A549 (cell line): ENCODE measurements at regions of chr12 and their contacts with region 1.

Region 1: GRCh38 chr12:40010899-40011774 is 94.7 kb downstream of the SLC2A13 start:
- DNase-seq: peak; percentile 55 to 80
- ATAC-seq: peak; percentile 95 to 98
- H3K4me3 ChIP-seq: no peak overlapping the region
- H3K27ac ChIP-seq: peak overlapping the region in 1 of 2 experiments; percentile 42; a peak in 3 of 6 replicates
- H3K4me1 ChIP-seq: peaks cover 18% of the 10 kb centered on the region
- CTCF ChIP-seq: peak; percentile 96
- EP300 ChIP-seq: no peak
- POLR2A ChIP-seq: no peak
- RAD21 ChIP-seq: peak; percentile 82

Region 2: DNA sequence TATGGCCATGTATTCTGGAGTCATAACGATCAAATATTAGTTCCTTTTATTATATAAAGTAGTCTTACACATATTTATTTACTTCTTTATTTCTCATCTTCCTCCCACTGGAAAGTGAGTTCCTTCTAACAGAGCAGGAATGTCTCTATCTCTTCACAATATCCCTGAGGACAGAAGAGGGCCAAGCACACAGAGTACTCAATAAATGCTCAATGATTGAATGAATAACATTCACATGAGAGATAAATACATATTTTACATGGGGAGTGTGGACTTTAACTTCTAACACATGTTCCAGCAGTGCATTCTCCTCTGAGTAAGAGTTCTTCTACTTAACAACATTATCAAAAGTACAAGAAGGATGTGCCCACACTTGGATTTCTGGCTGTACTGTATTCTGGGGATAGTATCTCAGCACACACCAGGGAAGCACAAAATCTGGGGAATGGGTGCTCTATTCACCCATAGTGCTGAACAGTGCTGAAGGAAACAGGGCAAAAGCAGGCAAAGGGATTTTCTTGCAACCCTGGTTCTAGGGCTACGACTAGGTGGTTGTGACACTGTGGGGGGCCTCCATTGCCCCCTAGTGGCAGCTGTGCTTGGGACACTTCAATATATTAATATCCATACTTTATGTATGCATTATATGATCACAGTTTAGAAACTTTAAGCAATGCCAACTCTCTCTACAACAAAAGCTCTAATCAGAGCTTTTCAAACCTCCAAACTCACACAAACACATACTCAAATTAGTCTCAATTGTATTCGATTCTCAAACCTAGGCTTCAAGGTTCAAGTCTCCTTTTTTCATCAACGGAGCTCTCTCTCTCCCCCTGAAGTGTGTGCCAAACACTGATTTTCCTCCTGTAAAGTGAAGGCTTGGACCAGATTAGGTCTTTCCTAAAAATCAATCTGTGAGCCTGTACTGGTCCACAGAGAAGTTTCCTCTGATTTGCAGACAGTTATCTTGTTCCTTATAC is 20.7 kb before region 1 on chr12:
- CTCF ChIA-PET with region 1: interaction called, 10 read pairs
- POLR2A ChIA-PET with region 1: no interaction called
- DNase-seq: peak; percentile 15 to 53
- ATAC-seq: peak; percentile 95 to 98
- H3K4me3 ChIP-seq: no peak overlapping the region
- H3K27ac ChIP-seq: no peak overlapping the region
- H3K4me1 ChIP-seq: no peaks in the 10 kb centered on the region
- CTCF ChIP-seq: peak; percentile 82
- EP300 ChIP-seq: no peak
- POLR2A ChIP-seq: no peak
- RAD21 ChIP-seq: peak; percentile 69 to 78

Region 3: DNA sequence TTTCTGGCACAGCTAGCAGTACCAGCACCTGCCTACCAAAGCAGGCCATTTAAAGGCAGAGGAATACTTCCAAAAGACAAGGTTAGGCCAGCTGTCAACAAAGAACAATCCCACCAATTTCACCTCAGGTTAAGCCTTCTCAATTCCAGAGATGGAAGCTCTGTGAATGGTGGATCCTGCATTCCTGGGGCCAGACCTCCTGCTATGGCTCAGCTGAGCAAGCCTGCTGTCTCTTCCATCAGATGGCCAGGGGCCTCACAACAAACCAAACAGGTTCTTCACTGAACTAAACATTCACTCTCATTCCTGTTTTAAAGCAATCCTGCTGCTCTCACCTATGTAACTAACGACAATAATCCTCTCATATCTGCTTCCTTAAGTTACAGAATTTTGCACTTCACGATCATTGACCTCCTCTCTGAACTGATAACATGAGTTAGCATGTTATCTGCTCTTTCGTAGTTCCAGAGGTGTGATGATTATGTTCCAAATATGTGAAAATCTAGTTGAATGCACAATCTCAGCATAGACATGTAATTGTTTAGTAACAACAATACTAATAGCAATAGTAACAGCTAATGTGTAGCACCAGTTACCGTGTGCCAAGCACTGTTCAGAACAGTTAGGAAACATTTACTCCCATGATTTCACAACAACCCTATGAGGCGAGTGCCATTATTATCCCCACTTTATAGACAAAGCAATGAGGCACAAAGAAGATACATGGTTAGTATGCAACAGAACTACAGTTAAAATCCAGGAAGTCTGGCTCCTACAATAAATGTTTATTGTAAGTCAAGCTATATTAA is 21.5 kb after region 1 on chr12:
- CTCF ChIA-PET with region 1: interaction called, 17 read pairs
- POLR2A ChIA-PET with region 1: interaction called, 4 read pairs
- DNase-seq: no peak
- ATAC-seq: 0 out of 6 replicates have a peak, but pooled peaks of 1 of the 2 experiments have one; percentile 27
- H3K4me3 ChIP-seq: no peak overlapping the region
- H3K27ac ChIP-seq: no peak overlapping the region
- H3K4me1 ChIP-seq: peaks cover 21% of the 10 kb centered on the region
- CTCF ChIP-seq: no peak
- EP300 ChIP-seq: no peak
- POLR2A ChIP-seq: no peak
- RAD21 ChIP-seq: no peak

Region 4: DNA sequence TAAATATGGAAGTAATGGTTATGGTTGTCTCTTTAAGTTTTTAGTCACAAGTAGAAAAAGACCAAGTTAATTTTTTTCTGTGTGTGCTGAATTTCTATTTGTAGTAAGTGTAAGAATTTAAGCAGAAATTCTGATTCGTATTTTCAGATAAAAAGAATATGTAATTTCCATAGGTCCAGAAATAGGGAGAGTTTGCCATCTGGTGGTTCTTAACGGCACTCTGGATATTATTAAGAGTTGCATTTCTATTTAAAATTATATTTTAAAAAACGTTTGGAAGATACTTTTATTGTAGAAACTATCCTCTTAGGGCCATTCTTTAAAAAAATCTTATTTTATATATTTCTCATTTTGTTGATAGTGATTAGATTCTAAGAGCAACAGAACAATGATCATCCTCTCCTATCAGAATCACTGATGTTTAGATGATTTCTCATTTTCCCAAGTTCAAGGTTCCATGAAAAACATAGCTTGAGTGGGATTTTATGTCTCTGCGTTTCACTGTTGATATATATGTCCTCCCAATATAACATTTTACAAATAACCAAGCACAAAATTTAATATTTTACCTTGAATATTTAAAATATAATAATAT is 301.9 kb after region 1 on chr12:
- CTCF ChIA-PET with region 1: interaction called, 10 read pairs
- POLR2A ChIA-PET with region 1: no interaction called
- DNase-seq: peak; percentile 13 to 49
- ATAC-seq: 0 out of 6 replicates have a peak, but pooled peaks of 1 of the 2 experiments have one; percentile 50
- H3K4me3 ChIP-seq: no peak overlapping the region
- H3K27ac ChIP-seq: peak overlapping the region in 1 of 2 experiments; percentile 20; a peak in 1 of 6 replicates
- H3K4me1 ChIP-seq: peaks cover 9% of the 10 kb centered on the region; the same call in 2 of the 3 replicates
- CTCF ChIP-seq: peak; percentile 90
- EP300 ChIP-seq: no peak
- POLR2A ChIP-seq: no peak
- RAD21 ChIP-seq: peak; percentile 90 to 96